CD14-positive monocyte (primary cell): ENCODE measurements at regions of chr6 and their contacts with region 1.

Region 1: DNA sequence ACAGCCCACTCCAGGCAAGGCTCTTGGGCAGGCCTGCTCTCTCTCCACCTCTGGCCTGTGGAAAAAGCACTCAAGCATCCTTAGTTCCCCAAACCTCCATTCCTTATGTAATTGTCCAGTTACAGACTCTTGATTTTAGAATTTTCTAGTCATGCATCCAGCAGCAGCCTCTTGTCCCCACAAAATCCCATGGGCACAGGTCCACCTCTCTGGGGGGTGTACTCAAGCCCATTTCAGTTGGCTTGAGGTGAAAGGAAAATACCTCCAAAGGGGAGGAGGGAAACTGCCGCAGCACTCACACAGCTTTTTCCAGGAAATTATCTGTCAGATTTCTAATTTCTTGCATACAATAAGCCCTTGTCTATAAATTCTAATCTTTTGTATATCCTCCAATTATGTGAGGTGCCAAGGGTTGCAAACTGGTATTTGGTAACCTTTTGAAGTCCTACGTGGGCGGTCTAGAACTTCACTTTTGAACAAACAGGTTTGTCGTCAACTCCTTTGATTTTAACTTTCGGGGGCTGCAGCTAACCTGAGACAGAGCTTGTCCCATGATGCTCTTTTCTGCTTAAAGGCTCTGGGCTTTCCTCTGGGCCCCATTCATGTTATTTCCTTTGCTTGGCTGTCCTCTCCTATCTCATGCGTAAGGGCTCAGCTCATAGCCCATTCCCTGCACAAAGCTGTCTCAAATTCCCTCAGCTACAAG is 104.7 kb upstream of the CEP85L start:
- DNase-seq: no peak
- H3K4me3 ChIP-seq: no peak overlapping the region
- H3K4me3 Mint-ChIP-seq: no peak overlapping the region
- H3K27ac ChIP-seq: no peak overlapping the region
- H3K27ac Mint-ChIP-seq: peak overlapping the region in 2 of 7 donors; percentile 5 to 25
- H3K4me1 ChIP-seq: peaks cover 42 to 52% of the 10 kb centered on the region in 2 donors
- H3K4me1 Mint-ChIP-seq: peaks cover 59% of the 10 kb centered on the region
- H3K27me3 ChIP-seq: no peaks in the 10 kb centered on the region
- H3K27me3 Mint-ChIP-seq: peaks cover 0 to 4% (median 3%) of the 10 kb centered on the region in 3 donors
- CTCF ChIP-seq: no peak

Region 2: GRCh38 chr6:118709859-118710350 is 46.2 kb before region 1 on chr6:
- intact Hi-C with region 1: loop called in 1 of 2 experiments (anchors 5 kb)
- DNase-seq: peak in 2 of 3 donors; percentile 19 to 39
- H3K4me3 ChIP-seq: peak overlapping the region in 1 of 3 experiments; percentile 69
- H3K4me3 Mint-ChIP-seq: peak overlapping the region; percentile 74 to 93
- H3K27ac ChIP-seq: peak overlapping the region in 1 of 2 donors; percentile 66
- H3K27ac Mint-ChIP-seq: peak overlapping the region in 1 of 7 donors; percentile 93
- H3K4me1 ChIP-seq: peaks cover 30 to 40% of the 10 kb centered on the region in 2 donors
- H3K4me1 Mint-ChIP-seq: peaks cover 46% of the 10 kb centered on the region
- H3K27me3 ChIP-seq: no peaks in the 10 kb centered on the region
- H3K27me3 Mint-ChIP-seq: peaks cover 2 to 6% (median 2%) of the 10 kb centered on the region in 3 donors
- CTCF ChIP-seq: no peak